Heart right ventricle (tissue), 16 donors: ENCODE measurements at regions of chr15 and their contacts with region 1.

Region 1: DNA sequence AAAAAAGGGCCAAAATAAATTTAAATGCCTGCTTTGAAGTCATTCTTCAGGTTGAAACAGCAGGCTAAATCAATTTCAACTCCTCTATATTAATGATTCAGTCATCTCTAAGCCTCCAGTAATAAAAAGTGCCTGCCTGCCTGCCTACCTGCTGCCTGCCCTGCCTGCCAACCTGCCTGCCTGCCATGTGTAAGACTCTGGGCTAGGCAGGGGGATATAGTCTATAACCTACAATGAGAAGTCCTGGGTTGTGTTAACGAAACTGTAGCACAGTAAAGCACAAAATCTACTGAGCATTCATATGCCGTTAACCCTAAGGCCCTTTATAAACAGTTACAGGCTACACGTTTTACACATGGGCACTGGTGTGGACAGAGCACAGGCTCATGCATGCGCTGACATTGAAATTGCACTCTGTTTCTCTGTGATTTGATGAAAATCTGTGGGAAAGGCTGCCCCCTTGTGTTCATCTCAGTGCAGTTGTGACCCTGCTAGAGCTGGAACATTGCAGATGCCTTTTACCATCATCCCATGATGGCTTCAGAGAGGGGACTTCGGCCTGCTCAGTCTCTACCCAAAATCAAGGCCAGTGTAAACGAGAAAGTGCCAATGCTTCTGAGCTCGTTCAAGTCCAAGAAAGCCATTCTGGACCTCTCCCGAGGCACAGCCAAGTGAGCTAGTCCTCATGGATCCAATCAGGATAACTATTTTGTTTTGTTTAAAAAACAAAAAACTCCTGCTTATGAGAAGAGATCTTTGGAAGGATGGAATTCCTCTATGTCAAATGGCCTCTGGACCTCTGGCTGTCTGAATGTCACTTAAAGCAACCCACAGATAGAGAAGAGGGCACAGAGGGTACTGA is 64.6 kb downstream of the EFL1 start:
- DNase-seq: peak; percentile 31 to 84
- ATAC-seq: peak; percentile 85 to 94 (median 87)
- H3K4me3 ChIP-seq: no peak overlapping the region
- H3K27ac ChIP-seq: no peak overlapping the region
- H3K4me1 ChIP-seq: peaks cover 0 to 32% (median 5%) of the 10 kb centered on the region in 9 donors
- H3K27me3 ChIP-seq: no peaks in the 10 kb centered on the region
- CTCF ChIP-seq: peak; percentile 56 to 85 (median 83)

Region 2: GRCh38 chr15:81274931-81275707 is 922.8 kb before region 1 on chr15:
- intact Hi-C with region 1: loop called in 1 of 10 experiments (anchors 10 kb)
- DNase-seq: peak; percentile 76 to 84
- ATAC-seq: peak; percentile 80 to 95 (median 88)
- H3K4me3 ChIP-seq: no peak overlapping the region
- H3K27ac ChIP-seq: peak overlapping the region in 8 of 10 donors; percentile 20 to 66 (median 40)
- H3K4me1 ChIP-seq: peaks cover 0 to 18% (median 5%) of the 10 kb centered on the region in 9 donors
- H3K27me3 ChIP-seq: no peaks in the 10 kb centered on the region
- CTCF ChIP-seq: peak; percentile 70 to 85 (median 79)

Region 3: GRCh38 chr15:81480645-81481053 is 717.3 kb before region 1 on chr15:
- intact Hi-C with region 1: loop called in 7 of 10 experiments (anchors 1 to 10 kb)
- DNase-seq: peak in 1 of 2 donors; percentile 70
- ATAC-seq: peak in 7 of 8 donors; percentile 64 to 74 (median 71)
- H3K4me3 ChIP-seq: peak overlapping the region in 1 of 10 donors; percentile 2
- H3K27ac ChIP-seq: no peak overlapping the region
- H3K4me1 ChIP-seq: peaks cover 0 to 5% (median 0%) of the 10 kb centered on the region in 9 donors
- H3K27me3 ChIP-seq: no peaks in the 10 kb centered on the region
- CTCF ChIP-seq: peak; percentile 80 to 97 (median 86)

Region 4: DNA sequence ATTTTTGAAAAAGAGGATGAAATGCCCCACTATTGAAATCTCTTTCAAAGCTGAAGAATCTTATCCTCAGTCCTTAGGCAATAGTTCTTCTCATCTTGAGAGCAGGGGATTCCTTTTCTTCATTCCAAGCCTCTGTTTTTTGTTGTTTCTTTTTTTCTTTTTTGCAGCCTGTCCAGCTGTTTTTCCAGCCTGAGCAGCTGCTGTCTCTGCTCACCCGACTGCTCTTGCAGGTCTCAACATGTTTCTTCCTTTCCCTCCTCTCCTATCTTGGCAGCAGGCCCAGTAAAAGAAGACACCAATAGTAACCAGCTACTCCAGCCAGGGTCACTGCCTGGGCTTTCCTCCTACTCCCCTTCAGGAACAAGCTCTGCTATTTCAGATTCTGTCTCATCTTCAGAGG is 176.0 kb before region 1 on chr15:
- intact Hi-C with region 1: no loop called
- DNase-seq: peak in 1 of 2 donors; percentile 57
- ATAC-seq: peak in 4 of 8 donors; percentile 41 to 76 (median 57)
- H3K4me3 ChIP-seq: no peak overlapping the region
- H3K27ac ChIP-seq: no peak overlapping the region
- H3K4me1 ChIP-seq: peaks cover 0 to 7% (median 0%) of the 10 kb centered on the region in 9 donors
- H3K27me3 ChIP-seq: peaks cover 0 to 4% (median 0%) of the 10 kb centered on the region in 7 donors
- CTCF ChIP-seq: no peak

Region 5: GRCh38 chr15:82108489-82109078 is 89.4 kb before region 1 on chr15:
- intact Hi-C with region 1: loop called in 5 of 10 experiments (anchors 1 to 5 kb)
- DNase-seq: peak; percentile 32 to 72
- ATAC-seq: peak; percentile 65 to 92 (median 88)
- H3K4me3 ChIP-seq: no peak overlapping the region
- H3K27ac ChIP-seq: no peak overlapping the region
- H3K4me1 ChIP-seq: no peaks in the 10 kb centered on the region
- H3K27me3 ChIP-seq: no peaks in the 10 kb centered on the region
- CTCF ChIP-seq: peak; percentile 46 to 91 (median 74)

Region 6: GRCh38 chr15:82139823-82140268 is 58.1 kb before region 1 on chr15:
- intact Hi-C with region 1: loop called in 1 of 10 experiments (anchors 5 kb)
- DNase-seq: no peak
- ATAC-seq: peak in 1 of 8 donors; percentile 28
- H3K4me3 ChIP-seq: no peak overlapping the region
- H3K27ac ChIP-seq: no peak overlapping the region
- H3K4me1 ChIP-seq: peaks cover 0 to 14% (median 0%) of the 10 kb centered on the region in 9 donors
- H3K27me3 ChIP-seq: no peaks in the 10 kb centered on the region
- CTCF ChIP-seq: peak; percentile 56 to 81 (median 71)

Region 7: DNA sequence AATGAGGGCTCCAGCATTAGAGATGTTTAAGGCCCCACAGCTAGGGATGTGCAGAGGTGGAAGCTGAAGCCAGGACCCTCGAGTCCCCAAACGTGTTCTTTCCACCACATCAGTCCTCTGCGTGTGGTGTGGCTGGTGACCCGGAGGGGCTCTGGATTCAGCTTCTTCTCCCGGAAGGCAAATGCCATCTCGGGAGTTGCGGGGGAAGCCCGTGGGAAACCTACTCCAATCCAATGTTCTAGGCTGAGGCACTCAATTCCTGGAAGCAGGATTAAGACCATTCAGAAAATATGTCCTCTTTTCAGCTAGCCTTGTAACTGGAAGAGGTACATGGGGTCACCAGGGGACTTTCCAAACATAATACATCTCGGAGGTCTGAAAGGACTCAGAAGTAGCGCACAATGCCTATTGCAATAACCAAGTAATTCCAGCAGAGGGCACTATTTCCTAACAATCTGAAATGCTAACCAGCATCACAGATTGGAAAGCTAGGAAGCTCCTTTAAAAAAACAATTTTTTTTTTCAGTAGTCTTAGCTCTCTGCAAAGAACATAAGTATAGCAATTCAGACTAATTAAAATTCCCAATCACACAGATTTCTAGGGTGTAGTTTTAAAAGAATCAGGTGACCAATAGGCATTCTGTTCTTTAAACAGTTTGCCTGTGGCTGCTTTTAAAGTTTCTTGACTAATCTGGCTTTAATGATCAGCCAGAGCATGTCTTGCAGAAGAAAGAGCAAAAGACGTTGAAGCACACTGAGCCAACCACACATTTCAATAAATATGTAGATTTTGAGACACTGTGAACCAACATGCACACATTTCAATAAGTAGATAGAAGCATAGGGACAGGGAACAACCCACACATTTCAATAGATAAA is 1050.4 kb after region 1 on chr15:
- intact Hi-C with region 1: no loop called
- DNase-seq: peak in 1 of 2 donors; percentile 37
- ATAC-seq: peak in 5 of 8 donors; percentile 46 to 62 (median 58)
- H3K4me3 ChIP-seq: no peak overlapping the region
- H3K27ac ChIP-seq: no peak overlapping the region
- H3K4me1 ChIP-seq: no peaks in the 10 kb centered on the region
- H3K27me3 ChIP-seq: peaks cover 0 to 61% (median 40%) of the 10 kb centered on the region in 7 donors
- CTCF ChIP-seq: peak; percentile 83 to 96 (median 94)